ENCODE measurements at regions of chr20 and their contacts with region 1.

Region 1: GRCh38 chr20:38412877-38413577 is 22.1 kb downstream of the SNHG17 start:
- DNase-seq: no peak
- H3K4me3 ChIP-seq: no peak overlapping the region
- H3K27ac ChIP-seq: no peak overlapping the region
- H3K4me1 ChIP-seq: no peaks in the 10 kb centered on the region
- H3K27me3 ChIP-seq: no peaks in the 10 kb centered on the region
- CTCF ChIP-seq: no peak

Region 2: GRCh38 chr20:38338849-38339520 is 74.0 kb before region 1 on chr20:
- CTCF ChIA-PET with region 1: interaction called, 4 read pairs
- dilution Hi-C with region 1: no loop called
- in situ Hi-C with region 1: no loop called
- intact Hi-C with region 1: loop called (anchors 1 kb)
- DNase-seq: peak; percentile 34
- H3K4me3 ChIP-seq: no peak overlapping the region
- H3K27ac ChIP-seq: no peak overlapping the region
- H3K4me1 ChIP-seq: no peaks in the 10 kb centered on the region
- H3K27me3 ChIP-seq: no peaks in the 10 kb centered on the region
- CTCF ChIP-seq: peak; percentile 25 to 64

Region 3: DNA sequence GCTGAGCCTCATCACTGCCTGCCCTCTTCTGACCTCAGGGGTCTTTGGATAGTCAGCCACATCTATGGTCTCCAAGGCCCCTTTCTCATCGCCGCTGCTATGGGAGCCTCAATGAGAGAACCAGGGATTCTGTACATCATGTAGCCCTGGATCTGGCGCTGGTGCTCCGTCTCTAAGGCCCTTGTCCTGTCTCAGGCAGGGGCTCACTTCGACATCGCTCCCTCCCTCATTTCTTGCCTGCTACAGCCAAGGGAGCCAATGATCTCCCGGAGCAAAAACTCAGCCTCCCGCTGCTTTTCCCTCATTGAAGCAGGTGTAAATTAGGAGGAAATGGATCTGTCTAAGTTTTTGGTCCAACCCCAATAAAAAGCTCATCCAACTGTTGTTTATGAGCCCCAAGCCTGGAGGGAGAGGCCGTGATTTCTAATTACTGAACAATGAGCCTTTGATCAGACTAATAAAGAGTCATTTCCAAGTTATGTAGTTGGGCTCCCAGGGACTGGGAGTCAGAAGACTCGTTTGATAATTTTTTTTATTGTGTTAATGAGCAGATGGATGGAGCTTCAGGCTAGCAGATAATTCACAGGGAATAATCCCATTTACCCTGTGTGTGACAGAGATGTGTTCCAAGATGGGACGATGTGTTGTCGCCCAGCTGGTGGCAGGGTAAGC is 35.9 kb before region 1 on chr20:
- CTCF ChIA-PET with region 1: interaction called, 10 read pairs
- dilution Hi-C with region 1: no loop called
- in situ Hi-C with region 1: no loop called
- intact Hi-C with region 1: no loop called
- DNase-seq: peak; percentile 26
- H3K4me3 ChIP-seq: no peak overlapping the region
- H3K27ac ChIP-seq: no peak overlapping the region
- H3K4me1 ChIP-seq: no peaks in the 10 kb centered on the region
- H3K27me3 ChIP-seq: no peaks in the 10 kb centered on the region
- CTCF ChIP-seq: no peak